ENCODE measurements at regions of chr10 and their contacts with region 1.

Region 1: GRCh38 chr10:32367793-32368453 is 21.0 kb upstream of the EPC1 start:
- DNase-seq: peak; percentile 65 to 81 (median 68)
- H3K4me3 ChIP-seq: no peak overlapping the region
- H3K4me3 Mint-ChIP-seq: peak overlapping the region; percentile 7 to 81 (median 46)
- H3K27ac ChIP-seq: no peak overlapping the region
- H3K27ac Mint-ChIP-seq: peak overlapping the region; percentile 23 to 89 (median 53)
- H3K4me1 ChIP-seq: peaks cover 27% of the 10 kb centered on the region
- H3K4me1 Mint-ChIP-seq: peaks cover 46 to 77% (median 58%) of the 10 kb centered on the region in 3 donors
- H3K27me3 ChIP-seq: no peaks in the 10 kb centered on the region
- H3K27me3 Mint-ChIP-seq: no peaks in the 10 kb centered on the region

Region 2: DNA sequence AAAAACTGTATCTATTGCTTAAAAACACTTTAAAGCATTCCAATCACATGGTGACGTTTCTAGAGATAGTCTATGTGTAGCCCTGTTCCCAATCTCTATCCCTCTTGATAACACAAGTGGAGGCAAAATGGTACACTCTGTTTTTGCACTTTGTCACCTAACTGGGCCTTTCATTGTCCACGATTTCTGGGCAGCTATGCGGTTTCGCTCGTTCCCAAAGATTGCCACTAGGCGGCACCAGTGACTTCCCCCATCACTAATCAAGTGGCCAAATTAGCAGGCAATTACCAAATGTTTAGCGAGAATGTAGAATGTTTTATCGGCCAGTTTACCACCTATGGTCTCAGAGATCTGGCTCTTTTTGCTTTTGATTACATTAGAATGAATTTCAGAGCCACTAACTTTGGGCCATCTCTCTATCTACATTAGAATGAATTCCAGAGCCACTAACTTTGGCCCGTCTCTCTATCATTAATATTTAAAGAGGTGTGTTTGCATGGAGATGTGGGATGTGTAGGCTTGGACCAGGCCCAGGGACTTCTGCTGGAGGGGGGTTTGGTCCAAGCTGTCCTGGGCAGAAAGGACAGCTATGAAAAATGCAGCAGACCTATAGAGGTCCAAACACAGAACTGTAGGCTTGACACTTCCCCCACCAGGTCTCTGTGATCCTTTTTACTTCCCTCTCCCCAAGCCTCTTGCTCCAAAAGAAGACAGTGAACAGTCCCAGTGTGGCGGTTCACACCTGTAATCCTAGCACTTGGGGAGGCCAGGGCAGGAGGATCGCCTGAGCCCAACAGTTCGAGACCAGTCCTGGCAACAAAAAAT is 111.1 kb before region 1 on chr10:
- CTCF ChIA-PET with region 1: interaction called, 24 read pairs
- POLR2A ChIA-PET with region 1: interaction called, 3 read pairs
- DNase-seq: peak; percentile 41 to 77 (median 55)
- H3K4me3 ChIP-seq: no peak overlapping the region
- H3K4me3 Mint-ChIP-seq: peak overlapping the region in 1 of 7 donors; percentile 10
- H3K27ac ChIP-seq: no peak overlapping the region
- H3K27ac Mint-ChIP-seq: no peak overlapping the region
- H3K4me1 ChIP-seq: peaks cover 7% of the 10 kb centered on the region
- H3K4me1 Mint-ChIP-seq: peaks cover 7 to 8% (median 8%) of the 10 kb centered on the region in 3 donors
- H3K27me3 ChIP-seq: no peaks in the 10 kb centered on the region
- H3K27me3 Mint-ChIP-seq: no peaks in the 10 kb centered on the region

Region 3: DNA sequence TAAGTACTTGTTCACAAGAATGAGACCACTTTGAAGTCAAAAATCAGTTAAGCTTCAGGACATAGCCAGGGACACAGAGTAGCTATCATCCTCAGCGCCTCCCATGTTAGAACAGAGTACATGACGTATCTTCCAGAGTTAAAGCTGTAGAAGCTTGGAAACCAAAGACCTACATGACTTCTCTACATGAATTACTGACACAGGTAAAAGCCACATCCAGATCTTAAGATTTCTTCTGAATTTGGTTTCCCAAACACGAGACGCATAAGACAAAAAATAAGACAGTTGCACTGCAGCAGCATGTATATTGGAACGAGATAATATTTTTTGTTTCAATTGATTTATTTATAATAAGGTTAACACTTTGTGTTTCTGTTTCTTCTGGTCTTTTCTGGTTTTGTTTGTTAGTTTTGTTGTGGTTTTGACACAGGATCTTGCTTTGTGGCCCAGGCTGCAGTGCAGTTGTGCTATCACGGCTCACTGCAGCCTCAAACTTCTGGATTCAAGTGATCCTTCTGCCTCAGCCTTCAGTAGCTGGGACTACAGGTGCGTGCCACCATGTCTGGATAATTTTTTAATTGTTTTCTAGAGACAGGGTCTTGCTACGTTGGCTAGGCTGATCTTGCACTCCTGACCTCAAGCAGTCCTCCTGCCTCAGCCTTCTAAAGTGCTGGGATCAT is 10.7 kb before region 1 on chr10:
- CTCF ChIA-PET with region 1: interaction called, 16 read pairs
- POLR2A ChIA-PET with region 1: no interaction called
- DNase-seq: peak in 4 of 5 donors; percentile 13 to 63 (median 59)
- H3K4me3 ChIP-seq: no peak overlapping the region
- H3K4me3 Mint-ChIP-seq: peak overlapping the region; percentile 48 to 85 (median 74)
- H3K27ac ChIP-seq: no peak overlapping the region
- H3K27ac Mint-ChIP-seq: peak overlapping the region; percentile 0 to 96 (median 89)
- H3K4me1 ChIP-seq: peaks cover 63% of the 10 kb centered on the region
- H3K4me1 Mint-ChIP-seq: peaks cover 67 to 86% (median 78%) of the 10 kb centered on the region in 3 donors
- H3K27me3 ChIP-seq: no peaks in the 10 kb centered on the region
- H3K27me3 Mint-ChIP-seq: no peaks in the 10 kb centered on the region

Region 4: DNA sequence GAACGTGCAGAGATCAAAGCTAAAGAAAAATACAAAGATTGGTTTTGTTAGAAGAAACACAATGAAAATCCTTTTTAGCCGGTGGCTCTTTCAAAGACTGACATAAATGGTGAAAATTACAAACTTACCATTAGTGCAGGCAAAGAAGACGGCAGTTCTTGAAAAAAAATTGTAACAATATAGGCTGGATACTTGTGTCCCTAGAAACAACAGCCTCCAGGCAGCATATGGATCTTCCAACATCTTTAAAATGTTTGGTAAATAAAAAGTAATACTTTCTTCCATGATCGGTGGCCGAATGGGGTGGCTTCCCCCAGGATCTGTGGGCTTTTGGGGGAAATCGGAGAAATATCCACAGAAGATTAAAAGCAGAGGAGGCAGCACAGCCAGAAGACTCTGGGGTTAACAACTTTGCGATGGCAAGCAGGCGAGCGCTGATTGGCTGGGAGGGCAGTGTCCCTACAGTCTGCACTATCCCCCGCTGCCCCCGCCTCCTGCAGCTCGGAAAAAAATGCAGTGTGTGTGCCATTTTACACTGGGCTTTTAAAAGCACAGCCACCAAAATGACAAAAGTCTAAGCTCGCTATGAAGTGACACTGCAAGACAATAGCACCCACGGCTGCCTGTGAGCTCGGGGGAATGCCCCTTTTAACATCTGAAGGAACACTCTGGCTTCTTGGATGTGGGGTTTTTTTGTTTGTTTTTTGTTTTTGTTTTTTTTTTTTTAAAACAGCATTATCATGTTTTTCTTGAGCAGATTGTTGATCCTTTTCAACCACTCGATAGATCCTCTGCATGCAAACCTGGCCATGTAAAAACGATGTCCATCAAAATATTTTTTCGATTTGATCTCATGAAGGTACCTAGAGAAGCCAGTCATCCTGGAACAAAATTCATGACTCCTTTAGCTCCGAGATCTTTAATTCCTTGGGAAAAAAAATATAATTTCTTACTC is 10.7 kb after region 1 on chr10:
- CTCF ChIA-PET with region 1: interaction called, 10 read pairs
- POLR2A ChIA-PET with region 1: interaction called, 6 read pairs
- DNase-seq: peak; percentile 88 to 95 (median 88)
- H3K4me3 ChIP-seq: peak overlapping the region; percentile 92
- H3K4me3 Mint-ChIP-seq: no peak overlapping the region
- H3K27ac ChIP-seq: peak overlapping the region; percentile 89
- H3K27ac Mint-ChIP-seq: no peak overlapping the region
- H3K4me1 ChIP-seq: peaks cover 20% of the 10 kb centered on the region
- H3K4me1 Mint-ChIP-seq: peaks cover 21 to 26% (median 23%) of the 10 kb centered on the region in 3 donors
- H3K27me3 ChIP-seq: no peaks in the 10 kb centered on the region
- H3K27me3 Mint-ChIP-seq: no peaks in the 10 kb centered on the region

Measured in CD8-positive, alpha-beta memory T cell (primary cell).